ENCODE measurements at regions of chr2 and their contacts with region 1.

Region 1: DNA sequence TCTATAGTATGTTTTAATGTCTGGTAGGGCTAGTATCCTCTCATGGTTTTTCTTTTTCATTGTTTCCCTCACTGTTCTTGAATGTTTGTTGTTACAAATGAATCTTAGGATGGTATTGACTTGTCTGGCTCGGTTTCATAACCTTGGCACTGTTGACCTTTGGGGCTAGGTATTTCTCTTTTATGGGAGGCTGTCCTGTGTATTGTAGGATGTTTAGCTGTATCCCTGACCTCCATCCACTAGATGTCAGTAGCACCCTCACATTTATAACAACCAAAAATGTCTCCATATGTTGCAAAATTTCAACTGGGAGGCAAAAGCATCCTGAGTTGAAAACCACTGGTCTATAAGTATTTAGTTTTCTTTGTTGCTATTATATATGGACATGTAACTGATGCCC is 7.0 kb upstream of the AOX1 start:
- DNase-seq: peak; percentile 67
- ATAC-seq: peak; percentile 73
- H3K4me3 ChIP-seq: no peak overlapping the region
- H3K27ac ChIP-seq: no peak overlapping the region
- H3K4me1 ChIP-seq: peaks cover 7% of the 10 kb centered on the region
- H3K27me3 ChIP-seq: no peaks in the 10 kb centered on the region
- CTCF ChIP-seq: peak; percentile 85

Region 2: GRCh38 chr2:199973703-199974102 is 605.1 kb before region 1 on chr2:
- CTCF ChIA-PET with region 1: no interaction called
- POLR2A ChIA-PET with region 1: no interaction called
- intact Hi-C with region 1: loop called (anchors 5 kb)
- DNase-seq: peak; percentile 50
- ATAC-seq: peak; percentile 39
- H3K4me3 ChIP-seq: no peak overlapping the region
- H3K27ac ChIP-seq: no peak overlapping the region
- H3K4me1 ChIP-seq: peaks cover 15% of the 10 kb centered on the region
- H3K27me3 ChIP-seq: no peaks in the 10 kb centered on the region
- CTCF ChIP-seq: peak; percentile 82

Region 3: GRCh38 chr2:200618587-200619021 is 39.8 kb after region 1 on chr2:
- CTCF ChIA-PET with region 1: interaction called, 7 read pairs
- POLR2A ChIA-PET with region 1: no interaction called
- intact Hi-C with region 1: loop called (anchors 2 kb)
- DNase-seq: peak; percentile 34
- ATAC-seq: peak; percentile 48
- H3K4me3 ChIP-seq: no peak overlapping the region
- H3K27ac ChIP-seq: no peak overlapping the region
- H3K4me1 ChIP-seq: peaks cover 36% of the 10 kb centered on the region
- H3K27me3 ChIP-seq: no peaks in the 10 kb centered on the region
- CTCF ChIP-seq: peak; percentile 47; the same call in 1 of the 2 replicates

Region 4: GRCh38 chr2:200631287-200631686 is 52.5 kb after region 1 on chr2:
- CTCF ChIA-PET with region 1: no interaction called
- POLR2A ChIA-PET with region 1: no interaction called
- intact Hi-C with region 1: no loop called
- DNase-seq: no peak
- ATAC-seq: no peak
- H3K4me3 ChIP-seq: no peak overlapping the region
- H3K27ac ChIP-seq: no peak overlapping the region
- H3K4me1 ChIP-seq: peaks cover 11% of the 10 kb centered on the region; the same call in 1 of the 2 replicates
- H3K27me3 ChIP-seq: no peaks in the 10 kb centered on the region
- CTCF ChIP-seq: no peak

Region 5: DNA sequence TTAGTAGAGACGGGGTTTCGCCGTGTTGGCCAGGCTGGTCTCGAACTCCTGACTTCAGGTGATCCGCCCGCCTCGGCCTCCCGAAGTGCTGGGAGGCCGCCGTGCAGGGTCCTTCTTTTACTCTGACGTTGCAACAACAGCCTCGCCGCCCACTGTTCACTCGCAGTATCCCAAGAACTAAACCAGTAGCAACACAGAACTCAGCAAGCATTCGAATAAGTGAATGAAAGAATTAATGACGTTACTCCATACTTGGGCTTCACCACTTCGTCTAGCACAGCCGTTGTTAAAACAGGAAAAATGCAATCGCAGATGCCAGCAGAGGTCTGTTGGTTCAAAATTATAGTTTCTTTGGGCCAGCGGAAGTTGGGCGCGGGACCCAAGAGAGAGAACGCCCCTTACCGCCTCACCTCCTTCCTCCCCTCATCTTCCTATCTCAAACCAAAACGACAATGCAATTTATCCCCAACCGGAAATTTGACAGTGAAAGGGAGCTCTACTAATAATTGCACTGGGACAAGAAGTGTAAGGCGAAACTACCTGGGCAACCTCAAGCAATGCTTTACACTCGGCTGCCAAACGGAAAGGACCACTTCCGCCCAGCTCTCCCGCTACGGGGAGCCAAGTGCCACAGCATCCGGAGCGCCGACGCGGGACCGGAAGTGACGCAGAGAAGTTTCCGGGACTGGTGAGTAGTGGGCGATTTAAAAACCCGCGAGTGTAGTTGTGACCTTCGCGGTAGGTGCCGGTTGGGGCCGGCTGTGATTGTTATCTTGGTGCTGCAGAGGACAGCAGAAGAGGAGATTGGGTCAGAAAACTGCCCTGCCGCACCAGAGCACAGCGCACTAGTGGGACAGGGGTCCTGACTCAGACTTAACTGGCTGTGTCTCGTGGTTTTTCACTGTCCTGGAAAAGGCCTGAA is 310.2 kb after region 1 on chr2 and contains the starts of genes NIF3L1 and PPIL3:
- CTCF ChIA-PET with region 1: no interaction called
- POLR2A ChIA-PET with region 1: no interaction called
- intact Hi-C with region 1: loop called (anchors 10 kb)
- DNase-seq: peak; percentile 99
- ATAC-seq: peak; percentile 82
- H3K4me3 ChIP-seq: peak within 1 kb of the TSS; percentile 87
- H3K27ac ChIP-seq: peak within 1 kb of the TSS; percentile 96
- H3K4me1 ChIP-seq: peaks cover 9% of the 10 kb centered on the region
- H3K27me3 ChIP-seq: no peaks in the 10 kb centered on the region
- CTCF ChIP-seq: no peak
- total RNA-seq, gene NIF3L1: 63.1 and 81.5 TPM in 2 replicates
- total RNA-seq, gene PPIL3: 25.9 and 37.1 TPM in 2 replicates